ENCODE measurements at regions of chr10 and their contacts with region 1.

Region 1: DNA sequence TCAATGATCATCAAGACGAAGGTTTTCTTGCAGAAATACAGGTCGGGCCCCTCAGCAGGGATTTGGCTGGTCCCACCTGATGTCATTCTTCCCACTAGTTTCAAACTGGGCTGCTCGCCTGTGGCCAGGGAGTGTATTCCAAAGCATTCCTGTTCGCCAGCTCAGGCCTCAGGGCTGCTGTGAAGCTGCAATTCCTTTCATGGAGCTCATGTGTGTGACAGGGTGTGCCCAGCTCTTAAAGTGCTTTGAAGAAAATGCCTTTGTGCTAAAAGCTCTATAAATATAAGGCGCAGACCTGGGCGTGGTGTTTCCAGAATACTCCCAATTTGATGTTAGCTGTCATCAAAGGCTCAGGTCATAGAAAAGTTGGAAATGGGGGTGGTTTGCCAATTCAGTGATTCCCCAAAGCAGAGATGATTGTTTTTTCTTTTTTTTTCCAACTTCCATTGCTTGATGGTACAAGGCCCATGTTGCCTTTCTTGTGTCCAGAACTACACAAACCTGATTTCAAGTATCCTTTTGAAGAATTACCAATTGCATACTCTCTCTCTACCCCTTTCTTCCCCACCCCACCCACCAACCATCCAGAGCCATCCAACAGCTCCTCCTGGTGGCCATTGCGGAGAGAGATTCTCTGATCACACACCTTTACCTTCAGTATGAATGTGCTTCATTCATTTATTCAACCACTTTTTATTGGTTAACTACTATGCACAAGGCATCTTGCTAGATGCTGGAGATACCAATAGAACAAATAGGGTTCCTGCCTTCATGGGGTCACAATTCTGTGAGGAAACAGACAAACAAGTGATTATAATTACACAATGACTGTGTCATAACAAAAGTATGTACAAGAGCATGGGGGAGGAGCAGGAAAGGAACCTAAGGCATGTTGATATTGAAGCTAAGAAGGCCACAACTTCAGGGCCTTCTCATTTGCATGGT is 297.3 kb upstream of the LYZL1 start:
- DNase-seq: peak; percentile 44
- H3K4me3 ChIP-seq: no peak overlapping the region
- H3K27ac ChIP-seq: no peak overlapping the region
- H3K4me1 ChIP-seq: no peaks in the 10 kb centered on the region
- H3K27me3 ChIP-seq: no peaks in the 10 kb centered on the region
- CTCF ChIP-seq: peak; percentile 64 to 70 (median 66)
- POLR2A ChIP-seq: no peak

Region 2: DNA sequence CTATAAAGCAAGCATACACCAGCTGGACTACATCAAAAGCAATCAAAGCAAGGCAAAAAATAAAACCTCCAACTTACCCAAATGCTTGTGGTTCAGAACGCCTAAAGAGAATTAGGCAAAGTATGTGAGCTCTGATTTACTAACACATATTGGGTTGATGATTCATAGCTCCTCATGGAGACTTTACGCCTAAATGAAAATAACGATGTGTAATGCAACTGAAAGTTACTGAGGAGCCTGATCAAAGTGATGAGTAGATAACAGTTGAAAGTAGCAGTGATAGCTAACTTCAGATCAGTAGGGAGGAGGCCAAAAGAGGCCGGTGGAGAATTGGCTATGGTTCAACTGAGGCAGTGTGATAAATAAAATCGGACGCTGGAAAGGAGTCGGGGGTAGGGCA is 773.8 kb before region 1 on chr10:
- intact Hi-C with region 1: no loop called
- DNase-seq: no peak
- H3K4me3 ChIP-seq: no peak overlapping the region
- H3K27ac ChIP-seq: no peak overlapping the region
- H3K4me1 ChIP-seq: no peaks in the 10 kb centered on the region
- H3K27me3 ChIP-seq: no peaks in the 10 kb centered on the region
- CTCF ChIP-seq: no peak
- POLR2A ChIP-seq: no peak

Region 3: DNA sequence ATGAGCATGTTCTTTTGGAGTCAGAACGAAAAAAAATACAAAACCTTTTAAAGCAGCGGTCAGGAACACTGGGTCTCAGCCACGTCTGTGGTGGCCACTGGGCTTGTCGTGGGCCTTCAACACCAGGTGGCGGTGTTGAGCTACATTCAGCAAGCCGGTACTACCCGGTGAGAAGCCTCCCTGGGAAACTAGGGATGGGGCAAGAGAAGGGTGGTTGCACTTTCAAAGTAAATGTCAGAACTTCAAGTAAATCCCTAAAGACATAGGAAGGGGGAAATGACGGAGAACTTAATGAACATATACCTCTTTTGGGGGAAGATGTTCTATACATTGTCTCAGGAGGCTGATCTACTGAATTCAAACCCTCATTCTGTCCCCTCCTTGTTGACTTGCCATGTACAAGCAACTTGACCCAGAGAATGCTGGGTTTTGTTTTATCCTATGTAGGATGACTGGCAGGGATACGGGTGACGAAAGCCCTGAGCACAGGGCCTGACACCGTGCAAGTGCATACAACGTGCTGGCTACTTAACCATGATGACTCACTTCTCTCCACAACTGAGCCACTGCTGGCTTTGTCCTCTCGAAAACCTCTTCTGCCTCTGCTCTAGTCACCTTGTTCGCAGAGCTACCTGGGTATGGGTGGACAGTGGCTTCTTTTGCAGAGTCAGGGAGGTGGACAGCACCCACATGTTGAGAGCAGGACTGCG is 363.3 kb before region 1 on chr10:
- intact Hi-C with region 1: no loop called
- DNase-seq: peak; percentile 90
- H3K4me3 ChIP-seq: no peak overlapping the region
- H3K27ac ChIP-seq: no peak overlapping the region
- H3K4me1 ChIP-seq: no peaks in the 10 kb centered on the region
- H3K27me3 ChIP-seq: no peaks in the 10 kb centered on the region
- CTCF ChIP-seq: peak; percentile 57 to 83 (median 67)
- POLR2A ChIP-seq: no peak

Region 4: GRCh38 chr10:28663576-28664313 is 327.9 kb before region 1 on chr10:
- intact Hi-C with region 1: loop called (anchors 10 kb)
- DNase-seq: peak; percentile 88
- H3K4me3 ChIP-seq: no peak overlapping the region
- H3K27ac ChIP-seq: no peak overlapping the region
- H3K4me1 ChIP-seq: peaks cover 9% of the 10 kb centered on the region
- H3K27me3 ChIP-seq: no peaks in the 10 kb centered on the region
- CTCF ChIP-seq: peak; percentile 87 to 92 (median 90)
- POLR2A ChIP-seq: no peak

Region 5: DNA sequence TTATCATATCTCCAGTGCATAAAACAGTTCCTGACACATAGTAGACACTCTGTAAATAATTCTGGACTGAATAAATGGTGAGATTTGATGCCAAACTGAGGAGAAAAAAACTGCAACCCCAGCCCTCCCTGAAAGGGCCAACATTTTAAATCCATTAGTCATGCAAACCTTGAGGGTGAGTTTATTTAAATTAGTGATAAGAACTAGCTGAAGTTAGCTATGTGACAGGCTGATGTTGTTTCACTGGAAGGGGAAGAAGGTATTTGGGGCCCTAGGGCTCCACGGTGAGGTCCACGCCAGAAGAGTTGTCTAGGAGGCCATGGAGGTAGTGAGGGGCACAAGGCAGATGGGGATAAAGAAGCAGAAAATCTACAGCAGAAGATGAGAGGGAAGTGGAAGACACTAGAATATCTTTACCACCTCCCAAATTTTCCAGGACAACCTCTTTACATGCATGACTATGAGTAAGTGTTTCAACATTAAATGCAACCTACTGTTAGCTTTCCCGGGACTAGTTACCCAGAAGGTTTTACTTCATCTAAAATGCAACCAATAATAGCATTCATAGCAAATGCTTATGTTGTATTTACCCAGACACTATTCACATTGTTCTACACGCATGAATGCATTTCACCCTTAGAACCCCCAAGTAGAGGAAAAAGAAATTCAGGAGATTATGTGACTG is 114.1 kb after region 1 on chr10:
- intact Hi-C with region 1: no loop called
- DNase-seq: no peak
- H3K4me3 ChIP-seq: no peak overlapping the region
- H3K27ac ChIP-seq: no peak overlapping the region
- H3K4me1 ChIP-seq: no peaks in the 10 kb centered on the region
- H3K27me3 ChIP-seq: no peaks in the 10 kb centered on the region
- CTCF ChIP-seq: no peak
- POLR2A ChIP-seq: no peak

Region 6: GRCh38 chr10:29119374-29119773 is 127.8 kb after region 1 on chr10:
- intact Hi-C with region 1: no loop called
- DNase-seq: peak; percentile 77
- H3K4me3 ChIP-seq: peak overlapping the region in 1 of 2 donors; percentile 33
- H3K27ac ChIP-seq: no peak overlapping the region
- H3K4me1 ChIP-seq: no peaks in the 10 kb centered on the region
- H3K27me3 ChIP-seq: no peaks in the 10 kb centered on the region
- CTCF ChIP-seq: peak in 2 of 3 experiments; percentile 41 to 46
- POLR2A ChIP-seq: no peak

Measured in testis (tissue), 5 donors.